Posterior vena cava (tissue), 2 donors: ENCODE measurements at regions of chr1 and their contacts with region 1.

Region 1: GRCh38 chr1:152189657-152190442 is 30.8 kb upstream of the RPTN start:
- DNase-seq: peak; percentile 80

Region 2: GRCh38 chr1:152052606-152053005 is 137.2 kb before region 1 on chr1:
- intact Hi-C with region 1: loop called in 1 of 2 experiments (anchors 10 kb)
- DNase-seq: peak; percentile 96

Region 3: DNA sequence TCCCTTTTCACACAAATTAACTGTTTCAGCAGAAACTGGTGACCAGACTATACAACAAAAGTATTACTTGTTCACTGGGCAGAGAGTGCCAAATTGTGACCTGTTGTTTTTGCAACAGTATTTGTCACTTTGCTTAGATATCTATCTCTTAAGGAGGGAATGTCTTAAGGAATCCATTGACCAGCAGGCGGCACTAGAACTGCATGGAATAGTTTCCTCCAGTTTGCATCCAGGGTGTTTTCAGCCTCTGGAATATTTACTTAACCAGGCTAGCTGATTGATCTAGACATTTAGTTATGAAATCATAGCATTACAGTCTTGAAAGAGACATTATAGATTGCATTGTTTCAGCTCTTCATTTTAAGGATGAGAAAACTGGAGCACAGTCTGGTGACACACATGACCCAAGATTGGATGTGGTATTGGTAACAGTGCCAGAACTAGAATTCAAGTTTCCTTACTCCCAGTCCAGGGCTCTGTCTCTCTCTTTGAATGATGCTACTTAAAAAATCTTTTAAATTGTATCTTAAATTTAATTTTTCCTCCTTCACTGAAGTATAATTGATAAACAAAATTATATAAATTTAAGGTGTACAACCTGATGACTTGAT is 47.8 kb before region 1 on chr1:
- intact Hi-C with region 1: loop called in 1 of 2 experiments (anchors 2 kb)
- DNase-seq: no peak